ENCODE measurements at regions of chr18 and their contacts with region 1.

Region 1: DNA sequence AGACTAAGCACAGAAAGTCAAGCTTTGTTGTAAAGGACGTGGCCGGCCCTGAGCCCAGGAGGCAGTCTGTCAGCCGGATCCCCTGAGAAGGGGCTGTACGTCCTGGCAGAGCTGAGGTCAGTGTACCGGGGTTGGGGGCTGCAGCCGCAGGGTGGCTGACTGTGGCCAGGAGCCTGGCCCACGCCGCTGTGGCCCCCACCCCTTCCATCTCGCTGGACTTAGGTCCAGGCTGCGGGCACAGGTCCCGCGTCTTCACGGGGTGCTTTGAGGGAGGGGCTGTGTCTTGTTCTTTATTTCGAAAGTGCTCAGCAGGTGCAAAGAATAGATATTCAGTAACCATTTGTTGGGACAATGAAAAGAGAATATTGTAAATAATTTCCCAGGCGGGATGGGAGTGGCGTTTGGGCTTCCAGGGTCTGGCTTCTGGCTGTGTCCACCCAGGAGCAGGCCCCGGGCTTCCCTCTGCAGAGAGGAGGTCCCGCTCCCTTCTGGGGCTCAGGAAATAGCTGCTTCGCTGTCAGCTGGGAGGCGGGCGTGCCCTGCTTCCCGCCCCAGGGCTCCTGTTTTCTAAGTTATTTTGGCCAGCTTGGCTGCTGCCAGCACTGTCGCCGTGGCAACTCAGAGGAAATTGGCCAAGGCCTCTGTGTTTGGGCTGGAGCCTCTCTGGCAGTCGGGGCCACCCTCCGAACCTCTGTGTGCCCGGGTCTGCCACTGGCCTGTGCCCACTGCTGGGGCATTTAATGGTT is 7.4 kb downstream of the NFATC1 start:
- DNase-seq: peak in 2 of 3 donors; percentile 52 to 65
- H3K4me3 ChIP-seq: peak overlapping the region in 6 of 7 experiments; percentile 20 to 64 (median 52)
- H3K27ac ChIP-seq: peak overlapping the region; percentile 22 to 58
- H3K4me1 ChIP-seq: peaks cover 10 to 79% (median 77%) of the 10 kb centered on the region in 4 experiments
- H3K27me3 ChIP-seq: no peaks in the 10 kb centered on the region

Region 2: GRCh38 chr18:79413901-79414300 is 10.8 kb after region 1 on chr18:
- CTCF ChIA-PET with region 1: interaction called, 10 read pairs
- POLR2A ChIA-PET with region 1: no interaction called
- DNase-seq: no peak
- H3K4me3 ChIP-seq: no peak overlapping the region
- H3K27ac ChIP-seq: no peak overlapping the region
- H3K4me1 ChIP-seq: peaks cover 0 to 10% (median 2%) of the 10 kb centered on the region in 4 experiments
- H3K27me3 ChIP-seq: no peaks in the 10 kb centered on the region

Measured in common myeloid progenitor, CD34-positive (primary cell).